Dendritic cell treated with granulocyte-macrophage colony-stimulating factor and Interleukin-4, amounts not matched to agents 40 ng/mL and 50 ng/mL, for 4 days (primary cell): ENCODE measurements at regions of chr15 and their contacts with region 1.

Region 1: DNA sequence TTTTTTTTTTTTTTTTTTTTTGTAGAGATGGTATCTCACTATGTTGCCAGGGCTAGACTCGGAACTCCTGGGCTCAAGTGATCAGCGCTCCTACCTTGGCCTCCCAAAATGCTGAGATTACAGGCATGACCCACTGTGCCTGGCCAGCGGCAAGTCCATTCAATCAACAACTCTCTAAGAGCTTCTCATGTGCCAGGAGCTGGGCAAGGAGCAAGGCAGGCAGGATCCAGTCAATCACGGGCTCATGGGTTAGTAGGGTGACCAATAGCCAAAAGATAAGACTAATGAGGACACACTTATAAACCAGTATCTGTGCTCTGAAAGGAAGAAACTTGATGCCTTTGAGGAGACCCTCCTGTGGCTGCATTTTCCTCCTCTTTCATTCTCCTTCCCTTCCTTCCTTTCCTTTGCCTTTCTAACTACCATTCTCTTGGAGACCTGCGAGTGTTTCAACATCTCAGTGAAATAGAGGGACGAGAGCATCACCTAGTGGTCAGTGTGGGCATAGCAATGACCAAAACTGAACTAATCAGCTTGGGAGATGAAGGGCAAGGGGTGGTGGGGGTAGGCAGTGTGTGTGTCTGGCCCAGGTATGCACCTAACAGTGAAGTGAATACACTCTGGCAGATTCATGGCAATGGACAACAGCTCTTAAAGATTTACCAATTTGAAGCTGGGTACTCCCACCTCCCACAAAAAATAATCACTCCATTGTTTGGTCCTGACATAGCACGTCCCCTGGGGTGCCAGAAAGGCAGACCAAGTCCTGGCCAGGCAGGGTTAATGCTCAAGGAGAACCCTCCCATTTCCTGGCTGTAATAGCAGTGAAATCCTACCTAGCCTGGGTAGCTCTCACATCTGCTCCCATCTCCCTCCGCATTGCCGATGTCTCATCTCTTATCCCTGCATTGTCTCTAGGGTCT is 6.2 kb downstream of the RPP25 start:
- H3K4me3 Mint-ChIP-seq: no peak overlapping the region
- H3K27ac Mint-ChIP-seq: no peak overlapping the region
- H3K4me1 Mint-ChIP-seq: peaks cover 21% of the 10 kb centered on the region
- H3K27me3 Mint-ChIP-seq: peaks cover 7% of the 10 kb centered on the region

Region 2: GRCh38 chr15:74635228-74635627 is 315.1 kb before region 1 on chr15:
- intact Hi-C with region 1: loop called (anchors 5 kb)
- H3K4me3 Mint-ChIP-seq: no peak overlapping the region
- H3K27ac Mint-ChIP-seq: no peak overlapping the region
- H3K4me1 Mint-ChIP-seq: peaks cover 6% of the 10 kb centered on the region
- H3K27me3 Mint-ChIP-seq: no peaks in the 10 kb centered on the region

Region 3: DNA sequence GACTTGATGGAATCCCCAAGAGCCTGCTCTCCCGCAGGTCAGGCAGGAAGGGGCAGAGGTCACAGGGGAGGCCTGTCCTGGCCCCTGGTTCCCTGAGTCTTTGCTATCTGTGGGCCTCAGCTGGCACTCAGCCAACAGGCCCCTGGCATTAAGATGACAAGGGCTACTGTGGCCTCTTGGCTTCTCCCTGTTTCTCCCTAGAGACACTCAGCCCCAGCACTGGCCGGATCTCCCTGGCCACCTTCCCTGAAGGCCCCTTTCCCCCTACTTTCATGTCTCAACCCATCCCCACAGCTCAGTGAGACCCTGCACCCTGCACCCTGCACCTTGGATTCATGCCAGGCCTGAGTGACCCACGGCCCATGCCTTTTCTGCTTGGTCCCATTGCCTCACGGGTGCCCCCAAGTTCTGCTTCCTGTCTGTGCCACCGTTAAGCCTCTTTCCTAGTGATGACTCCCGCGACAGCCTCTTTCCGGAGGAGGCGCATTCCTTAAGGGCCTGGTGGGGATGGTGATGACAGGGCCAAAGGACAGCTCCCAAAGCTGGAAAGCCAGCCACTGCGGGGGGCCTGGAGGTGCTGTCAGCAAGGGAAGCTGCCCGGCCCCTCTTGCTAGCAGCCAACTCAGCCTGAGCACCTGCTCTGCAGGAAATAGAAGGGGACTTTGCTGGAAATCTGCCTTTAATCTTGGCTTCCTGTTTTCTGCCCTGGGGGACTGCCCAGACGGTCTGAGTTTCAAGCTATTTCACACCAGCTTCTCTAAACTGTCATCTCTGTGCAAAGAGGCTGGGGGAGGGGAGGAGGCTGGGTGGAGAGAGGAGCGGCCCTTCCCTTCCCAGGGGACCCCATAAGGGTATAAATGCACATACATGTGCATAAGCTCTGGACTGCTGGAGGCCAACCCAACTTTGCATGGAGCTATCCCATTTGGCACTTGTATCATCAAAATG is 173.2 kb before region 1 on chr15:
- intact Hi-C with region 1: loop called (anchors 5 kb)
- H3K4me3 Mint-ChIP-seq: peak overlapping the region; percentile 67
- H3K27ac Mint-ChIP-seq: peak overlapping the region; percentile 93
- H3K4me1 Mint-ChIP-seq: peaks cover 79% of the 10 kb centered on the region
- H3K27me3 Mint-ChIP-seq: no peaks in the 10 kb centered on the region